BJ (cell line): ENCODE measurements at regions of chr20 and their contacts with region 1.

Region 1: GRCh38 chr20:25178563-25179438 is 16.7 kb upstream of the ENTPD6 start:
- DNase-seq: peak; percentile 55
- H3K4me3 ChIP-seq: no peak overlapping the region
- H3K27me3 ChIP-seq: no peaks in the 10 kb centered on the region; the same call in 1 of the 2 replicates
- CTCF ChIP-seq: peak; percentile 77

Region 2: GRCh38 chr20:24634855-24635254 is 543.9 kb before region 1 on chr20:
- CTCF ChIA-PET with region 1: no interaction called
- POLR2A ChIA-PET with region 1: no interaction called
- DNase-seq: peak; percentile 76
- H3K4me3 ChIP-seq: no peak overlapping the region
- H3K27me3 ChIP-seq: no peaks in the 10 kb centered on the region; the same call in 1 of the 2 replicates
- CTCF ChIP-seq: no peak

Region 3: DNA sequence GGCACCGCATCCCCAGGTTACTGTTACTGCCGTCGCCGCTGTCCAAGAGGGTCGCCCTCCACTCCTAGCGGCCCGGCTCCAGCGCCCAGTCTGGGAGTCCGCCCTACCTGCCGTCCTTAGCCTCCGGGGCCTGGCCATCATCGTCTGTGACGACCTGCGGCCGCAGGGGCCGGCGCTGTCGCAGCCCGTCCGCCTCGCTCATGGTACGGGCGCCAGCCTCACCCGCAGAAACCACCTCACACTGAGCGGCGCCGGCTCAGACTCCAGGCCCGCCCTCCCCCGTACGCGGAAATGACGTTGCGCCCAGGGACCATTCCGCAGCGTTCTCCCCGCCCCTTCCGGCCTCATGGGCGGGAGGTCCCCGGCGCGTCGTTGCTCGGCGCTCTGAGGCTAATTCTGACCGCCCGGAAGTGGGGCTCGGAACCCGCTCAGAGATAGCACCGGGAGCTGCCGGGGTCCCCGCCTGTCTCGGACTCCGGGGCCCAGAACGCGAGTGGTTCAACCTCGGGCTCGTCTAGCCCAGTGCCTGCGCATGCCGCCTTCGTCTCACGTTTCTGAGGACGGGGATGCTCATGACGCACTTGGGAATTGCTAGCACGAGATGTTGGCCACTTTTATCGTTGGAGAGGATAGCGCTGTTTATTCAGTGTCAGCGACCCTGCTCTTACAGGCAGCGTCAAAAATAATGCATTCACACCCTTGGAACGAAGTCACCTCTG is 186.2 kb before region 1 on chr20 and contains the start of gene APMAP:
- CTCF ChIA-PET with region 1: interaction called, 16 read pairs
- POLR2A ChIA-PET with region 1: no interaction called
- DNase-seq: peak; percentile 44
- H3K4me3 ChIP-seq: peak within 1 kb of the TSS; percentile 89
- H3K27me3 ChIP-seq: 0 out of 2 replicates have a peak, but pooled peaks cover 2% of the 10 kb centered on the region
- CTCF ChIP-seq: no peak
- polyA plus RNA-seq, gene APMAP: 75.8 and 76.2 TPM in 2 replicates

Region 4: GRCh38 chr20:25065625-25066338 is 113.0 kb before region 1 on chr20:
- CTCF ChIA-PET with region 1: interaction called, 12 read pairs
- POLR2A ChIA-PET with region 1: no interaction called
- DNase-seq: no peak
- H3K4me3 ChIP-seq: no peak overlapping the region
- H3K27me3 ChIP-seq: peaks cover 41% of the 10 kb centered on the region
- CTCF ChIP-seq: peak; percentile 82

Region 5: DNA sequence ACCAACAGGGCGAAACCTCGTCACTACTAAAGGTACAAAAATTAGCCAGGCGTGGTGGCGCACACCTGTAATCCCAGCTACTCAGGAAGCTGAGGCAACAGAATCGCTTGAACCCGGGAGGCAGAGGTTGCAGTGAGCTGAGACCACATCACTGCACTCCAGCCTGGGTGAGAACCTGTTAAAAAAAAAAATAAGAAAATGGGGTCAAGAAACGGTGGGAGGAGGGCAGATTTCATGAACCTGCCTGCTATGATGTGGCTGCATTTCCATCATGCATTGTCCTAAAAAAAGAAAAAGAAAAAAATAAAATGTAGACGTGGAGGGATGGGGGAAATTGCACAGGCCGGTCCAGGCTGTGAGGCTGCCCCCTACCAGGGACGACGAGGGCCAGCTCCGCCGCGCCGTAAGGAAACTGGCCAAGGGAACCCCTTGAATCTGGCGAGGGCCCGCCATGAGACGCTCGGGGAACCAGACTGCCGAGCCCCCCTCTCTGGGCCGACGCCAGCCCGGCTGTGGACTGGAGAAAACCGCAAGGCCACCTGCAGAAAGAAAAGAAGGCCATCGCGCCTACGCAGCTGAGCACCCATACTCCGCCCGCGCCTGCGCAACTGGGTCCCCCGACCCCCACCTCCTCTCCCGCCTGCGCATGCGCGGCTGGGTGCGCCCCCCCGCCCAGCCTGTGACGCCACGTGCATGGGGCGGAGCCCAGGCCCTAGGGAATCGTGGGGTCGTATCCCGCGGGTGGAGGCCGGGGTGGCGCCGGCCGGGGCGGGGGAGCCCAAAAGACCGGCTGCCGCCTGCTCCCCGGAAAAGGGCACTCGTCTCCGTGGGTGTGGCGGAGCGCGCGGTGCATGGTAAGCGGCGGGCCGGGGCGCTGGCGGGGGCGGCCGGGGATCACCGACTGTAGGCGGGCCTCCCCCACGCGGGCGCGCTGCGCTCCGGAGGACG is 16.5 kb after region 1 on chr20 and contains the start of gene ENTPD6:
- CTCF ChIA-PET with region 1: interaction called, 11 read pairs
- POLR2A ChIA-PET with region 1: interaction called, 3 read pairs
- DNase-seq: peak; percentile 18
- H3K4me3 ChIP-seq: peak within 1 kb of the TSS; percentile 94
- H3K27me3 ChIP-seq: peaks cover 9% of the 10 kb centered on the region
- CTCF ChIP-seq: peak; percentile 42
- polyA plus RNA-seq, gene ENTPD6: 53.1 and 70.8 TPM in 2 replicates